ENCODE measurements at regions of chr5 and their contacts with region 1.

Region 1: GRCh38 chr5:150449517-150450339 is at the start of gene RPS14:
- DNase-seq: peak; percentile 96
- ATAC-seq: peak; percentile 95
- H3K4me3 ChIP-seq: peak within 1 kb of the TSS; percentile 78
- H3K27ac ChIP-seq: peak within 1 kb of the TSS; percentile 96
- H3K4me1 ChIP-seq: peaks cover 33% of the 10 kb centered on the region
- CTCF ChIP-seq: peak; percentile 88
- EP300 ChIP-seq: no peak
- POLR2A ChIP-seq: peak; percentile 81
- RAD21 ChIP-seq: no peak
- polyA plus RNA-seq, gene RPS14: 3,799 and 4,312 TPM in 2 replicates

Region 2: GRCh38 chr5:150517272-150518152 is 67.8 kb after region 1 on chr5:
- CTCF ChIA-PET with region 1: interaction called, 18 read pairs
- POLR2A ChIA-PET with region 1: no interaction called
- DNase-seq: peak; percentile 87 to 93
- ATAC-seq: peak; percentile 69 to 81
- H3K4me3 ChIP-seq: no peak overlapping the region; the same call in 2 of the 3 replicates
- H3K27ac ChIP-seq: peak overlapping the region; percentile 86 to 92
- H3K4me1 ChIP-seq: peaks cover 94% of the 10 kb centered on the region
- CTCF ChIP-seq: no peak
- EP300 ChIP-seq: peak; percentile 60 to 72; a peak in 3 of 5 replicates
- POLR2A ChIP-seq: no peak
- RAD21 ChIP-seq: peak in 1 of 2 experiments; percentile 21; a peak in 1 of 5 replicates

Region 3: DNA sequence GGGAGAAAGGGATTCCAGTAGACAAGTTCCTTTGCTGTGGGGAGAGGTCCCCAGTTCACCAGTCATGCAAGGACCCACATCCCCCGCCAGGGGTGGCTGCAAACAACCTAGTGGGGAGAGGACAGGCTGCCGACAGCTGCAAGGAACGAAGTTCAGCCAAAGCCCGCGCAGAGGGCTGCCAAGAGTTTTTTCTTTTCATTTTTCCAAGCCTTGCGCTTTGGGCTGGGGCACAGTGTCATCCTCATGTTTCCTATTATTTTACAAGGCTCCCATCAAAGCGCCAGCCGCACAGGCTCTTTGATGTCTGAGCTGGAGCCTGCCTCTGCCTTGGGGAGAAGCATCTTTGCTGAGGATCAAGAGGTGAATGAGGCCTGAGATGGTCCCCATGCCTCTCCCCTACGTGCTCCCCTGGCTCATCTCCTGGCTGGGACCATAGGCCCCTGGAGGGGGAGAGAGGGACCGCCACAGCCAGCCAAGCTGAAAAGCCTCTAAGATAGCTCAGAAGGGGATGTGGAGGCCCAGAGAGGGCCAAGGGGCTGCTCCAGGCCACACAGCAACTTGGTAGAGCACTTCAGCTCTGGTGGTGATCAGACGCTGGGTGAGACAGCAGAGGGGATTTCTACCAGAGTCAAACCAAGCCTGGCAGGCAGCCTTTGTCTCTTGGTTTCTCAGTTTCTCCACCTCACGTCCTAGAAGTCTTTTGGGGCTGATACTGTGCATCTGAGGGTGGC is 140.3 kb after region 1 on chr5:
- CTCF ChIA-PET with region 1: no interaction called
- POLR2A ChIA-PET with region 1: no interaction called
- DNase-seq: no peak
- ATAC-seq: peak in 1 of 2 experiments; percentile 50; a peak in 3 of 6 replicates
- H3K4me3 ChIP-seq: no peak overlapping the region
- H3K27ac ChIP-seq: no peak overlapping the region
- H3K4me1 ChIP-seq: no peaks in the 10 kb centered on the region
- CTCF ChIP-seq: no peak
- EP300 ChIP-seq: no peak
- POLR2A ChIP-seq: no peak
- RAD21 ChIP-seq: peak in 1 of 2 experiments; percentile 22; a peak in 2 of 5 replicates

Region 4: GRCh38 chr5:151126199-151126645 is 676.5 kb after region 1 on chr5:
- CTCF ChIA-PET with region 1: no interaction called
- POLR2A ChIA-PET with region 1: no interaction called
- DNase-seq: peak; percentile 72 to 74
- ATAC-seq: peak; percentile 84 to 93; a peak in 5 of 6 replicates
- H3K4me3 ChIP-seq: no peak overlapping the region
- H3K27ac ChIP-seq: no peak overlapping the region
- H3K4me1 ChIP-seq: peaks cover 7% of the 10 kb centered on the region; the same call in 2 of the 3 replicates
- CTCF ChIP-seq: peak; percentile 85
- EP300 ChIP-seq: no peak
- POLR2A ChIP-seq: no peak
- RAD21 ChIP-seq: peak; percentile 74 to 78

Measured in A549 (cell line).